Gastrocnemius medialis (tissue), 4 donors: ENCODE measurements at regions of chrX and their contacts with region 1.

Region 1: GRCh38 chrX:85544609-85545008 is 165.1 kb upstream of the POF1B start:
- DNase-seq: no peak
- ATAC-seq: no peak
- H3K4me3 ChIP-seq: no peak overlapping the region
- H3K27ac ChIP-seq: no peak overlapping the region
- H3K4me1 ChIP-seq: no peaks in the 10 kb centered on the region
- H3K27me3 ChIP-seq: no peaks in the 10 kb centered on the region
- CTCF ChIP-seq: peak in 2 of 5 experiments; percentile 20 to 44
- POLR2A ChIP-seq: no peak

Region 2: DNA sequence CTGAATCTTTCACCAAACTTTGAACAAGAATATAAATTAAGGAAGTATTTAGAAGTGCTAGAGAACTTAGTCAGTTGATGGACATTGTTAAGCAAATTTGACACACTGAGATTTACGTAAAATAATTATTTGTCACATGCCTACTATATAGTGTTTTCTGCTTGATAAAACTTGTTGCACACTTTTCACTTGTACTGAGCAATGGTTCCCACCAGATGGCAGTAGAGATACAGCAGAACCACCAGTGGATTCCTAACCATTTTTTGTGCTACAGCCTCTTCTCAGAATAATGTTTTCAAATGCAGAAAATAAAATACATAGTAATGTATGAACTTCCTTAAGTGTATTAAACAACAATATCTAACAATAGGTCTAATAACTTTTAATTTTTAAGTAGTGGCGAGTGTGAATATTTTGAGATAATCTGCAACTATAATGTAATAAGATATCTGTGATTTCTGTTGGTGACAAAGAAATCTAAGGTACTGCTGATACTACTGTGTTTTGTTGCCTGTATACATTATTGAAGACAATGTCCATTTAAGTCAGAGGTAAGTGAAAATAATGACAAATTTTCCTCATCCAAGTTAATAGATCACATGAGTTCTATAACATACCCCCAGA is 459.7 kb before region 1 on chrX:
- in situ Hi-C with region 1: no loop called
- intact Hi-C with region 1: loop called (anchors 10 kb)
- DNase-seq: no peak
- ATAC-seq: no peak
- H3K4me3 ChIP-seq: no peak overlapping the region
- H3K27ac ChIP-seq: no peak overlapping the region
- H3K4me1 ChIP-seq: no peaks in the 10 kb centered on the region
- H3K27me3 ChIP-seq: peaks cover 0 to 4% (median 0%) of the 10 kb centered on the region in 3 donors
- CTCF ChIP-seq: peak; percentile 16 to 77 (median 42)
- POLR2A ChIP-seq: no peak

Region 3: GRCh38 chrX:85111347-85111746 is 433.3 kb before region 1 on chrX:
- in situ Hi-C with region 1: loop called in 1 of 4 experiments (anchors 25 kb)
- intact Hi-C with region 1: loop called (anchors 10 kb)
- DNase-seq: no peak
- ATAC-seq: no peak
- H3K4me3 ChIP-seq: no peak overlapping the region
- H3K27ac ChIP-seq: no peak overlapping the region
- H3K4me1 ChIP-seq: no peaks in the 10 kb centered on the region
- H3K27me3 ChIP-seq: no peaks in the 10 kb centered on the region
- CTCF ChIP-seq: peak; percentile 14 to 66 (median 34)
- POLR2A ChIP-seq: no peak